ENCODE measurements at regions of chr16 and their contacts with region 1.

Region 1: DNA sequence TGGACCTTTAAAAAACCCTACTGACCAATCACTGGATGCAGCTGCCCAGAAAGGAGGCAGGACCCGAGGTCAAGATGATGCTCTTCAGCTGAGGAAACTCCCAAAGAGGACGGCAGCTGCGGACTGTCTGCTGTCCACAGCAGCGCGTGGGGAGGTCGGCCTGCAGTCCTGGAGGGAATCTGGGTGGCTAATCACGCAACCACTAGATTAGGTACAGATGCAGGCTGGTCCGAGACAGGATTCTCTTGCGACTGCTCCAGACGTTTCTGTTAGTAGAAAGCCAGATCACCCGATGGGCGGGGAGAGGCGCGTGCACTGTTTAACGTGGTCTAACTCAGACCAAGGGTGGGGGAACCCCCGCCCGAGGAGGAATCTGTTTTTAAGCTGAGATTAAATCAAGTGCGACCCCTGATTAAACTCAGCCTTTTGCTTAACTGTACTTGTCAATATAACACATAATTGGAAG is 8.8 kb downstream of the CTRB2 start:
- H3K4me3 ChIP-seq: no peak overlapping the region
- H3K27ac ChIP-seq: no peak overlapping the region
- H3K4me1 ChIP-seq: no peaks in the 10 kb centered on the region
- CTCF ChIP-seq: no peak

Region 2: DNA sequence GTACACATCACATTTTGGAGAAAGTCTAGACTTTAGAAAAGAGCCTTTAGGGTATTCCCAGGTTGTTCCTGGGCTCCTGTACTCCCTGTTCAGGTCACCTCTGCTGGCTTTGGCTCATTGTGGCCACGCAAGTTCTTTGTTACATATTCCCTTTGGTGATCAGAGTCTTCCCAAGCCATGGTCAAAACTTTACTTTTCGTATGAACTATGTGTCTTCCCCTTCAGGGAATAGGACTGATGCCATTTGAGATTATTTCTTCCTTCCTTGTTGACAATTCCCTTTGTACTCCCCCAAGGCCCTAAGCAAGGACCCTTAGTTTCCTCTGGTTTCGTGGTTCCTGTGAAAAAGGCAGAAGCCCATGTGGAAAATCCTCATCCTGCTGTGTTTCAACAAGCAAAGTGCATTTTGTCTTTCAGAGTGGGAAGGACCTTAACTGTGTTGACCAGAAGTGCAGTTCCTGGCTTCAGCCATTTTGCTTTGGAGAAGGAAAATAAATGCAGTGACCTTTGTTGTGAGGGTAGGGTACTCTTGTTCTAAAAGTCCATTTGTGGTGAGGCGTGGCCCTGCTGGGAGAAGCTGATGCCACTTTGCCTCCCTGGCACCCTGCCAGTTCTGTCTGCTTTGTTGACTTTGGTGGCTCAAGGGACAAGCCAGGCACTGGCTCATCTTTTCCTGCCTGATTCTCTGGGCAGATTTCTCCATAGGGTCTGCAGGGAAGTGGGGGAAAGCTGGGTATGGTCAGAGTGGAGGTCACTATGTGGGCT is 144.2 kb before region 1 on chr16:
- CTCF ChIA-PET with region 1: no interaction called
- POLR2A ChIA-PET with region 1: no interaction called
- H3K4me3 ChIP-seq: no peak overlapping the region
- H3K27ac ChIP-seq: no peak overlapping the region
- H3K4me1 ChIP-seq: peaks cover 9% of the 10 kb centered on the region
- CTCF ChIP-seq: no peak

Region 3: GRCh38 chr16:75219838-75220237 is 21.7 kb after region 1 on chr16:
- CTCF ChIA-PET with region 1: interaction called, 10 read pairs
- POLR2A ChIA-PET with region 1: interaction called, 4 read pairs
- H3K4me3 ChIP-seq: no peak overlapping the region
- H3K27ac ChIP-seq: no peak overlapping the region
- H3K4me1 ChIP-seq: no peaks in the 10 kb centered on the region
- CTCF ChIP-seq: no peak

Region 4: GRCh38 chr16:75279305-75279704 is 81.1 kb after region 1 on chr16:
- CTCF ChIA-PET with region 1: no interaction called
- POLR2A ChIA-PET with region 1: no interaction called
- H3K4me3 ChIP-seq: no peak overlapping the region
- H3K27ac ChIP-seq: no peak overlapping the region
- H3K4me1 ChIP-seq: no peaks in the 10 kb centered on the region
- CTCF ChIP-seq: no peak

Region 5: DNA sequence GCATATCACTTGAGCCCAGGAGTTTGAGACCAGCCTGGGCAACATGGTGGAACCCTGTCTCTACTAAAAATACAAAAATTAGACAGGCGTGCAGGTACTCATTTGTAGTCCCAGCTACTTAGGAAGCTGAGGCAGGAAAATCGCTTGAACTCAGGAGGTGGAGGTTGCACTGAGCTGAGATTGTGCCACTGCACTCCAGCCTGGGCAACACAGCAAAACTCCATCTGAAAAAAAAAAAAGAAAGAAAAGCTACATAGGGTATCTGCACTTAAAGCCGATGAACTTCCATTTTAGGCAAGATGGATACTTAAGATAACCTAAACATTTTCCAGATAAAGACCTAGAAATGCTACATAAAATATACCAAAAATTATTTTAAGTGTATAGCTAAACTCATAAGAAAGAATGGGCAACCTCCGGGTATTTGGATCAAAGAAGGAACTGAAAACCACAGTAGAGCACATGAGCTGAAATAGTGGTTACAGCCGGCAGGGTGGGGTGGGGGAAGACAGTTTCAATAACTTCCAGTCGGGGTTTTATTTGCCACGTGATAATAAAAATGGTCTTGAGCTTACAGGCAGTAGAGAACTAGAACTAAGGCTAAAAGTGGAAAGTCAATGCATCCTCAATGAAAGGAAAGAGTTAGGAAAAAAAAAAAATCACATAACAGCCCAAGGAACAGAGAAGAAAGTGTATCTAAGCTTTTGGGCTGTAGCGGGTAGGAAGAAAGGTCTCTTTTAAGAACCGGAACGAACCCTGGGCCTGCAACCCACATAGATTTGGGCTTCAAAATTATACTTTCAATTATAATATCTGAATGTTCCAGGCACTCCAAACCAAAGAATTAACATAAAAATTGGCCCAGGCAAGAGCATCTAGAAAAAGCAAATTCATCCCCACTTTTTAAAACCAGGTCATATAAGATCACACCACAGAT is 182.0 kb after region 1 on chr16:
- CTCF ChIA-PET with region 1: interaction called, 30 read pairs
- POLR2A ChIA-PET with region 1: interaction called, 5 read pairs
- H3K4me3 ChIP-seq: no peak overlapping the region
- H3K27ac ChIP-seq: no peak overlapping the region
- H3K4me1 ChIP-seq: no peaks in the 10 kb centered on the region
- CTCF ChIP-seq: no peak

Region 6: DNA sequence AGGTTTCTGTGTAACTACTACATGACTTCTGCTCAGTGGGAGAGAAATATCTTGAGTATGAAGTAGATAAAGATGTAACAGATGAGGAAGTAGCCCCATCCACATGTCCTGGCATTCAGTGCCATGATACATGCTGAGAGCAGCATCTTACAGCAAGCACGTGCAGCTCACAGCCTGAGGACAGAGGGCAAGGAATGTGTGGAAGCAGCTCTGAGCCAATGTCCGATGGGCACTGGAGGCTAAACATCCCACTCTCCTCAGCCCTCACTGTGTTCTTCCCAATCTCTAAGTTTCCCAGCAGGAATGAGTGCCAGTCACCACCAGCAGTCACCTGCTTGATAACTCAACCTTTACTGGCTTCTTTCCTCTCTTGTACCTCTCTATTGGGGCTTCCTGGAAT is 194.7 kb after region 1 on chr16:
- CTCF ChIA-PET with region 1: interaction called, 21 read pairs
- POLR2A ChIA-PET with region 1: no interaction called
- H3K4me3 ChIP-seq: no peak overlapping the region
- H3K27ac ChIP-seq: no peak overlapping the region
- H3K4me1 ChIP-seq: no peaks in the 10 kb centered on the region
- CTCF ChIP-seq: no peak

Region 7: DNA sequence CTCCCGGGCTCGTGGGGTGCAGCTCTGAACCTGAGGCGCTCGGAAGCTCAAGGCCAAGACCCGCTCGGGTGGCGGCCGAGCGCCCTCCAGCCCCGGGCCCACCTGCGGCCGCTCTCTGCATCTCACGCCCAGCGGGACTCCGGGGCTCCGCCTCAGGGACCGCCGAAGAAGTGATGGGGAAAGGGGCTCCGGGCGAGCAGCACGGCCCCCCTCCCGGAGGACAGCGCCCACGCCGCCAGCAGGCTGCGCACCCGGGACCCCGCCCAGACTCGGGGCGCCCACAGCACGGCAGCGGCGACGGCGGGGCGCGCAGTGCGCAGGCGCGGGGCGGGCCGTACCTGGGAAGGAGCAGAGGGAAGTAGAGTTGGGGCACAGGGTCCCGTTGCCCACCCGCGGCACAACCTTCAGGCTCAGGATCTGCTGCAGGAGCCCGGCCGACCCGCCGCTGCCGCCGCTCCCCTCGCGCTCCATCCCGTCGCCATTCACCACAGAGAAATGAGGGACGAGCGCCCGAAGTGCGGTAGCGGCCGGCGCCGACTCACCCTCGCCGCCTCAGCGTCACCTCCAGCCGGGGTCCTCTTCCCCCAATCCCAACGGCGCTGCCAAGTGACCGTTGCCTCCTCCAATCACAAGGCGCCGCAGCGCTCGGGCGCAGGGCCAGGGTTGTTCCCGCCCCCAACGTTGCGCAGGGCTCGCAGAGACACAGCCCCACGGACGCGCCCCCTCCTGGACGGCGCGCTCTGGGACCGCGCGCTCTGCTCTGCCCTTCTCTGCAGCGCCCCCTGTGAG is 266.2 kb after region 1 on chr16 and contains the start of gene TMEM170A:
- CTCF ChIA-PET with region 1: interaction called, 17 read pairs
- POLR2A ChIA-PET with region 1: no interaction called
- H3K4me3 ChIP-seq: peak within 1 kb of the TSS; percentile 95
- H3K27ac ChIP-seq: peak within 1 kb of the TSS; percentile 84
- H3K4me1 ChIP-seq: peaks cover 9% of the 10 kb centered on the region
- CTCF ChIP-seq: peak; percentile 100

Region 8: DNA sequence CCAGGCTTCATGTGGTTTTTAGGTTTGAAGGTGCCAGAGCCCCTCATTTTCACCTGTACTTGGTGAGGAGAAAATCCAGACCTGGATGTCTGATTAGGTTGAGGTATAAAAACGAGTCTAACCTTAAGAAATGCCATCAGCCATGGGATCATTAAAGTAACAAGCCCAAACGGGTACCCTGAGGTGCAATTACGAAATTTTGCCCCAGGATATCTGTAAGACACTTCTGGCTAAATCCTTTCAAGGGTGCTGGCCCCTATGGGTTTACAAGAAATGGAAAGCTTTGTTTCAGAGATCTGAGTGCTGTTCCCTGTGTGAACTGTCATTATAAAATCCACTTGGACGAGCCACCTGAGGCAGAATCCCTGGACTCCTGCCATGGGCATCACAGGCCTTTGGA is 405.1 kb after region 1 on chr16:
- CTCF ChIA-PET with region 1: no interaction called
- POLR2A ChIA-PET with region 1: no interaction called
- H3K4me3 ChIP-seq: no peak overlapping the region
- H3K27ac ChIP-seq: no peak overlapping the region
- H3K4me1 ChIP-seq: no peaks in the 10 kb centered on the region
- CTCF ChIP-seq: no peak